HCT116 (cell line): ENCODE measurements at regions of chr16 and their contacts with region 1.

Region 1: DNA sequence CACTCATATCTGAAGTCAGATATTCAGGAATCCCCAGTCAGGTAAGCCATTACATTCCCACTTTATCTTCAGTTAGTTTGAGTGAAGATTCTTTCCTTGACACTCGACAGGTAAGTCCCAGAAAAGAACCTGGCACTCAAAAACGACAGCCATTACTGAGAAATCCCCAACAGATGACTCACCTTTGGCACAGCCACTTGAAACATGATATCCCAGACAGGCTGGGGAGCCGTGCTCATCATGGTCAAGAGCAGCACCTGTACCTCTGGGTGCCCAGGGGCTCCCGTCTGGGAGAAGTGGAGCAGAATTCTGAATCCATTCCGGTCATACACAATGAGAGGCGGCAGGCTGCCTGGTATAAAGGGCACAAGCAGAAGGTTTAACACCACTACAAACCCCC is 16.8 kb upstream of the COG7 start:
- DNase-seq: peak; percentile 33
- ATAC-seq: peak; percentile 95
- H3K4me3 ChIP-seq: no peak overlapping the region
- H3K27ac ChIP-seq: peak overlapping the region; percentile 36; the same call in 1 of the 2 replicates
- H3K4me1 ChIP-seq: peaks cover 14 to 21% of the 10 kb centered on the region in 2 experiments
- H3K27me3 ChIP-seq: no peaks in the 10 kb centered on the region
- CTCF ChIP-seq: no peak
- POLR2A ChIP-seq: no peak
- RAD21 ChIP-seq: no peak

Region 2: GRCh38 chr16:23534868-23535860 is 65.3 kb after region 1 on chr16:
- CTCF ChIA-PET with region 1: no interaction called
- POLR2A ChIA-PET with region 1: no interaction called
- RAD21 ChIA-PET with region 1: no interaction called
- intact Hi-C with region 1: loop called (anchors 10 kb)
- DNase-seq: no peak
- ATAC-seq: no peak
- H3K4me3 ChIP-seq: no peak overlapping the region
- H3K27ac ChIP-seq: no peak overlapping the region
- H3K4me1 ChIP-seq: peaks cover 7 to 17% of the 10 kb centered on the region in 2 experiments
- H3K27me3 ChIP-seq: no peaks in the 10 kb centered on the region
- CTCF ChIP-seq: no peak
- POLR2A ChIP-seq: no peak
- RAD21 ChIP-seq: no peak